ENCODE measurements at regions of chr5 and their contacts with region 1.

Region 1: DNA sequence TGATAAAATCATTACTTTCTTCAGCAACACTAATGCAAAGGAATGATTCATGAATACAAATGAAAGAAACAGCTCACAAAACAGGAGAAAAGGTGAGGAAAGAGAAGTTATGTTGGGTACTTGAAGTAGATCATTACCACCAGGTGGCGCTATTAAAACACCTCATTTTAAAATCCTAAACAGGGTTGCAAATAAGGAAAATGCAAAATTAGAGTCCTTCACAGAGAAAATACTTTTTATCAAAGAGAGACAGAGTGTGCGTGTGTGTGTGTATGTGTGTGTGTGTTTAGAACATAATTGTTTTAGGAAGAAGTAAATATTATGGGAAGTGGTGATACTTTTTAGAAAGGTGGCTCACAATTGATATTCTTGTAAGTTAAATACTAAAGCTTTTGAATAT is 49.5 kb upstream of the CD180 start:
- DNase-seq: peak; percentile 88
- H3K4me3 Mint-ChIP-seq: no peak overlapping the region
- H3K27ac Mint-ChIP-seq: no peak overlapping the region
- H3K4me1 Mint-ChIP-seq: no peaks in the 10 kb centered on the region
- H3K27me3 Mint-ChIP-seq: no peaks in the 10 kb centered on the region
- CTCF ChIP-seq: peak; percentile 54

Region 2: DNA sequence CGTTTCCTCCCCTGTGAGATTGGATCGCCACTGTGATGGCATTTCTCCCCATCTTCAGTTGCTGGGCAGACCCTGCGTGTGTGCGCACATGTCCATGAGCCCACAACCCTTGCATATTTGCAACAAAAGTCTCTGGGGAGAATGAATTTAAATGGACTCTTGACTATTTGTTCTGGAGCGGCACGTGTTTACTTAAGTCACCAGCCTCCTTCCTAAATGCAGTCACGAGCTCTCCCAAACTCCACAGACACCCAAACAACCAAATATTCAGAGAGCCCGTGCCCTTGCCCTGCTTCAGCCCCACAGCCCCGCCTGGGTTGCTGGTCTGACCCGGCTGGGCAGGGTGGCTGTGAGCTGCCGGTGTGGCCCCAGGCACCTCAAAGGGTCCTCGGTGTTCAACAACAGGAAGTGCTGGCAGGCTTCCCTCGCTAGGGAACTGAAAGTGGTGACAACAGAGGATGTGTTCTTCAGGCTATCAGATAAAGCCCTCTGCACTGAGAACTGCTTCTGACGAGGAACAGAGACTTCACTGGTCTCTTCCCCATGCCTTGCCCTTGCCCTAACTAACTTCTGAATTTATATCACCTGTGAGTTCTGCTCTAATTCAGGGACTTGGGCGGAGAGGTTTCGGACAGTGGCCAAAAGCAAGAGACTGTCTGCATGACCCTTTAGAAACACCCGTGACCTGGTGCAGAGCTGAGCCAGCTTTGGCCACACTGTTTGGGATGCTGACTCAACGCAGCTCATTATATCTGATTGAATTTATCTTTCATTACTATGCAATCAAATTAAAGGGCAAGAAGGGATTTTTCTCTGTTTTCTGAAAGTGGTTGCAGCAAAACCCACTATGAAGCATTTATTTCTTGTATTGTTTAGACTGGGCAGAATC is 30.3 kb before region 1 on chr5:
- CTCF ChIA-PET with region 1: no interaction called
- POLR2A ChIA-PET with region 1: no interaction called
- intact Hi-C with region 1: no loop called
- DNase-seq: no peak
- H3K4me3 Mint-ChIP-seq: no peak overlapping the region
- H3K27ac Mint-ChIP-seq: no peak overlapping the region
- H3K4me1 Mint-ChIP-seq: peaks cover 18% of the 10 kb centered on the region
- H3K27me3 Mint-ChIP-seq: no peaks in the 10 kb centered on the region
- CTCF ChIP-seq: no peak

Region 3: GRCh38 chr5:67257500-67257899 is 11.4 kb after region 1 on chr5:
- CTCF ChIA-PET with region 1: interaction called, 4 read pairs
- POLR2A ChIA-PET with region 1: interaction called, 41 read pairs
- intact Hi-C with region 1: no loop called
- DNase-seq: peak; percentile 95
- H3K4me3 Mint-ChIP-seq: peak overlapping the region; percentile 22
- H3K27ac Mint-ChIP-seq: peak overlapping the region; percentile 98
- H3K4me1 Mint-ChIP-seq: peaks cover 44% of the 10 kb centered on the region
- H3K27me3 Mint-ChIP-seq: no peaks in the 10 kb centered on the region
- CTCF ChIP-seq: no peak

Region 4: GRCh38 chr5:67395790-67396418 is 149.8 kb after region 1 on chr5:
- CTCF ChIA-PET with region 1: interaction called, 4 read pairs
- POLR2A ChIA-PET with region 1: interaction called, 5 read pairs
- intact Hi-C with region 1: loop called (anchors 1 kb)
- DNase-seq: peak; percentile 17
- H3K4me3 Mint-ChIP-seq: no peak overlapping the region
- H3K27ac Mint-ChIP-seq: peak overlapping the region; percentile 77
- H3K4me1 Mint-ChIP-seq: peaks cover 30% of the 10 kb centered on the region
- H3K27me3 Mint-ChIP-seq: no peaks in the 10 kb centered on the region
- CTCF ChIP-seq: peak; percentile 8

Region 5: DNA sequence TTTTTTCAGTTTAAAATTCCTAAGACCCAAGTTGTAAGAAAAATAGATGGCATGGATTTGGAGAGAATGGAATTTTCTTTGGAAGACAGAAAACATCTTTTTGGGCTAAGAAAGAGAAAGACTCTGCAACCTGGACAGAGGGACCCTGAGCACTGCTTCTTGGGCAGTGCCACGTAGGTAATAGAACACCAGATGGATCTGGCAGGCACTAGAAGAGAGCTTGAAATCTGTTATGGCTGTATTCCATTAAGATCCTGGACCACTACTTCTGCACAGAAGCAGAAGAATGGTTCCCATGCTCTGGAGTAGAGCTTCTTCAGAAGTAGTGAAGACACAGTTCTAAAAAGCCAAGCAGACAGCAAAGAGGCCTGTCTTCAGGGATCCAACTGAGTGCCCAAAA is 256.8 kb after region 1 on chr5:
- CTCF ChIA-PET with region 1: no interaction called
- POLR2A ChIA-PET with region 1: no interaction called
- intact Hi-C with region 1: no loop called
- DNase-seq: no peak
- H3K4me3 Mint-ChIP-seq: no peak overlapping the region
- H3K27ac Mint-ChIP-seq: no peak overlapping the region
- H3K4me1 Mint-ChIP-seq: no peaks in the 10 kb centered on the region
- H3K27me3 Mint-ChIP-seq: no peaks in the 10 kb centered on the region
- CTCF ChIP-seq: no peak

Region 6: DNA sequence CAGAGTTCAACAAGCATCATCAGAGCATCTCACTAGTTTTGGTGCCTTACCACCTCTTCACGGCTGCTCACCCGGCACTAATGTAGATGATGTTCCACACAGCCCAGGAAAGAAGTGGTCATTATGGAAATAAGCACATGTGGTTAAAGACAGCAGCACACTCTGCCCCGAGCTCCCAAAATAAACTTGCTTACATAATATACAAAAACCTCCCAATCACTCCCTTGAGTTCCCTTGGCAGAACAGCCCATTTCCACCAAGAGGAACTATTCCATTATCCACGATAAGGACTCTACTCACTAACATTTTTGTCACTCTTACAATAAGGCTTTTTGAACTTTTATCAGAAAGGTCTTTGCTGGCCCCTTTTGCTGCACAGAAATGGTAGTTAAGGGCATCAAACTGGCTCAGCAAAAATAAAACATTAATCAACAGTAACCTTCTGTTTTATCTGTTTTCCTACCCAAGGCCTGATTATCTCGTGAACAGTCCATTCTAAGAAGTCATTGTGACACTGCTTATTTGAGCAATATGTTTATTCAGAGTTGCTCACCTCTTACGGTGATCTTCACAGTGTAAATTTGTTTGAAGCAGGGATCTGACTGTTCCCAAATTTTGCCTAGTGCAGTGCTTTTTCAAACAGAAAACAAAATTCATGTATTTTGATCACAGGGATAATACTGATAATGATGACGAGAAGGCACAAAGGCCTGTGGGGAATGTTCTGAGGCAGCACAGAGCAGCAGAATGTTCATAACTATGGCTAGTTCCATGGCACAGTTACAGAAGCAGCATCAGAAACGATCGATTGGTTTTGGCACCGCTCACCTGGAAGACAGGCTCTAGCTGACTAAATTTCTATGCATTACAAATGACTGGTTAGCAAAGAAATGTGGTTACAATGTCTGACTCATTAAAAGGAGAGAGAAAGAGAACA is 569.6 kb after region 1 on chr5:
- CTCF ChIA-PET with region 1: interaction called, 4 read pairs
- POLR2A ChIA-PET with region 1: interaction called, 5 read pairs
- intact Hi-C with region 1: loop called (anchors 5 kb)
- DNase-seq: peak; percentile 58
- H3K4me3 Mint-ChIP-seq: peak overlapping the region; percentile 26
- H3K27ac Mint-ChIP-seq: peak overlapping the region; percentile 82
- H3K4me1 Mint-ChIP-seq: peaks cover 26% of the 10 kb centered on the region
- H3K27me3 Mint-ChIP-seq: no peaks in the 10 kb centered on the region
- CTCF ChIP-seq: no peak

Region 7: DNA sequence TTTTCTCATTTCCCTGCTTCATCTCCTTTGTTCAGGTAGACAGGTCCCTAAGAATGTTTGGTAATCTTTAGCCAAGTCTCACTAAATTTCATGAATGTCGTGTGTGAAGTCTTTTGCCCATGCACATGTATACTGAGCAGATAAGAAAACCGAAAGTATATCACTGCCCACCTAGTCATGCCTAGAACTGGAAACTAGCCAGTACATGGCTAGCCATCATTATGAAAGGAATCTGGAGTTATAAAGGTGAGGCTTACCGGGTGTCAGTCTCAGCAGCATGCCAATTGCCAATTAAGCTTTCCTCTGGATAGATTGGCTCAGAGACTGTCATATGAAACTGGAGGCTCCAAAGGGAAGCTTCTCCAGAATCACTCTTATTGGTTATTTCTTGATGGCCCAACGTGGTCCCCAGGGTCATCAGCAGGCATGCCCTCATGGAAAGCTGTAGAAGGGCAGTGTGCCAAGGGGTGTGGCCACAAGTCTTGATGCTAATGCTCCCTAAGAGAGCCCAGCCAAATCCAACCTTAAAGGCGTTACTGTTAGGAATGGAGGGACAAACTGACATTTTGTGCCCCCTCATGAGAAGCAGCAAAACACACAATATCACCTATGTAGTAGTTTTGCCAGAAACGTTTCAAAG is 662.1 kb after region 1 on chr5:
- CTCF ChIA-PET with region 1: no interaction called
- POLR2A ChIA-PET with region 1: no interaction called
- intact Hi-C with region 1: no loop called
- DNase-seq: no peak
- H3K4me3 Mint-ChIP-seq: no peak overlapping the region
- H3K27ac Mint-ChIP-seq: no peak overlapping the region
- H3K4me1 Mint-ChIP-seq: no peaks in the 10 kb centered on the region
- H3K27me3 Mint-ChIP-seq: no peaks in the 10 kb centered on the region
- CTCF ChIP-seq: no peak

Region 8: DNA sequence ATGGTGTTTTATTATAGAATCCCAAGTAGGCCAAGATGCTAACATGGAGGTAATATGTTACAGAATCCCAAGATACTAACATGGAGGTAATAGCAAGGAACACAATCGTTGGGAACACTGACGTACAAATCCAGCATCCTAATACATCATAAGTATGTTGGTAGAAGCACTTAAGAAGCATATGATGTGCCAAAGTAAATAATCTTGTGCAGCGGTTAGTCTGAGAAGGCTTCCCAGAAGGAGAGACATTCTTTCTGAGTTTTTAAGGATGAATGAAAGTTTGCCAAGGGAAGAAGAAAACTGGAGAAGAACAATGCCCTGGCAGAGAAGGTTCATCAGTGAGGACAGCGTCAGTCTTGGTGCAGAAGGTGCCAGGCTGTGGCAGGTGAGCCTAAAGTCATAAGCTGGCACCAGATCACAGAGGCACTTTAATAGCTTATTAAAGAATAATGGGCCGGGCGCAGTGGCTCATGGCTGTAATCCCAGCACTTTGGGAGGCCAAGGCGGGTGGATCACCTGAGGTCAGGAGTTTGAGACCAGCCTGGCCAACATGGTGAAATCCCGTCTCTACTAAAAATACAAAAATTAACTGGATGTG is 675.0 kb after region 1 on chr5:
- CTCF ChIA-PET with region 1: no interaction called
- POLR2A ChIA-PET with region 1: no interaction called
- intact Hi-C with region 1: loop called (anchors 5 kb)
- DNase-seq: no peak
- H3K4me3 Mint-ChIP-seq: no peak overlapping the region
- H3K27ac Mint-ChIP-seq: peak overlapping the region; percentile 28
- H3K4me1 Mint-ChIP-seq: no peaks in the 10 kb centered on the region
- H3K27me3 Mint-ChIP-seq: no peaks in the 10 kb centered on the region
- CTCF ChIP-seq: no peak

Region 9: GRCh38 chr5:68460147-68460798 is 1214.2 kb after region 1 on chr5:
- CTCF ChIA-PET with region 1: no interaction called
- POLR2A ChIA-PET with region 1: no interaction called
- intact Hi-C with region 1: loop called (anchors 10 kb)
- DNase-seq: peak; percentile 67
- H3K4me3 Mint-ChIP-seq: no peak overlapping the region
- H3K27ac Mint-ChIP-seq: no peak overlapping the region
- H3K4me1 Mint-ChIP-seq: peaks cover 10% of the 10 kb centered on the region
- H3K27me3 Mint-ChIP-seq: no peaks in the 10 kb centered on the region
- CTCF ChIP-seq: peak; percentile 69